Naive thymus-derived CD4-positive, alpha-beta T cell (primary cell): ENCODE measurements at regions of chr1 and their contacts with region 1.

Region 1: GRCh38 chr1:156591432-156592157 is at the start of gene NAXE:
- DNase-seq: peak; percentile 54 to 81 (median 65)
- ATAC-seq: peak; percentile 97
- H3K4me3 ChIP-seq: peak within 1 kb of the TSS; percentile 69
- H3K4me3 Mint-ChIP-seq: peak within 1 kb of the TSS; percentile 82 to 93 (median 89)
- H3K27ac ChIP-seq: peak within 1 kb of the TSS; percentile 89
- H3K27ac Mint-ChIP-seq: peak within 1 kb of the TSS; percentile 86 to 98 (median 93)
- H3K4me1 ChIP-seq: peaks cover 8 to 12% of the 10 kb centered on the region in 2 donors
- H3K4me1 Mint-ChIP-seq: peaks cover 16 to 32% (median 28%) of the 10 kb centered on the region in 7 donors
- H3K27me3 ChIP-seq: no peaks in the 10 kb centered on the region
- H3K27me3 Mint-ChIP-seq: no peaks in the 10 kb centered on the region
- total RNA-seq, gene NAXE: 25.6 to 58.8 (median 40.7) TPM

Region 2: DNA sequence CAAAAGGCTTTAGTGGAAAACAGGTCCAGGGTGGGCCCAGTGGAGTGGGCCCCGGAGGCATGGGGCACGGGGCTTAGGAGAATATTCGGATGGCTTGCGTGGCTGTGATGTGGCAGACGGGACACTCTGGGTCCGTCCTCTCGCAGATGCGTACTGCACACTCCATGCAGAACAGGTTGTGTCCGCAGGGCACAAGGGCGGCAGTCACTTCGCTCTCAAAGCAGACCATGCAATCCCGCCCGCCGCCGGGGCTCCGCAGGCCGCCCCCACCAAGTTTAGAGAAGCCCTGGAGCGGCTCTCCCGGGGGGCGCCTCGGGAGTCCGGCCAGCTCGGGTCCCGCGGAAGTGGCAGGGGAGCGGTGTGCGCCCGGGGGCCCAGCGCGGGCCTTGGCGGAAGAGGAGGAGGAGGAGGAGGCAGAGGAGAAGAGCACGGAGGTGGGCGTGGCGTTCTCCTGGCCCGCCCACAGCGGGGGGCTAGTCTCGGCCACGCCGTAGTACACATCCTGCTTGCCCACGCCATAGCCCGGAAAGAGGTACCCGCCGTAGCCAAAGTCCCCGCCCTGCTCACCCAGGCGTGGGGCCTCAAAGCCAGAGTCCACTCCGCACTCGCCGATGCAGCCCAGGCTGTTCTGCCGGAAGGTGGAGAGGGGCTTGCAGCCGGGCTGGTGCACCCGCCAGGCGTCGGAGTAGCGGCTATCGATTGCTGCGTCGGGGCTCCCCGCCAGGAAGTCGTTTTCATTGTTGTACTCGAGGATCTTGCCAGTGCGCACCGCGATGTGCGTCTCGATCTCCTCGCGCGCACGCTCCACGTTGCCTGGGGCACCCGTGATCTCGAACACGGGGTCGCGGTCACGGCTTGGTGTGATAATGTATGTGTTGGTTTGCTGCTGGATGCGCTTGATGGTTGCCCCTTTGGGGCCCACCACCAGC is 514.8 kb before region 1 on chr1:
- CTCF ChIA-PET with region 1: no interaction called
- POLR2A ChIA-PET with region 1: no interaction called
- intact Hi-C with region 1: no loop called
- DNase-seq: no peak
- ATAC-seq: peak; percentile 65
- H3K4me3 ChIP-seq: no peak overlapping the region
- H3K4me3 Mint-ChIP-seq: peak overlapping the region in 2 of 10 donors; percentile 51 to 56
- H3K27ac ChIP-seq: no peak overlapping the region
- H3K27ac Mint-ChIP-seq: no peak overlapping the region
- H3K4me1 ChIP-seq: peaks cover 0 to under 1% of the 10 kb centered on the region in 2 donors
- H3K4me1 Mint-ChIP-seq: peaks cover 0 to 15% (median 0%) of the 10 kb centered on the region in 7 donors
- H3K27me3 ChIP-seq: no peaks in the 10 kb centered on the region
- H3K27me3 Mint-ChIP-seq: peaks cover 0 to 54% (median 5%) of the 10 kb centered on the region in 5 donors

Region 3: DNA sequence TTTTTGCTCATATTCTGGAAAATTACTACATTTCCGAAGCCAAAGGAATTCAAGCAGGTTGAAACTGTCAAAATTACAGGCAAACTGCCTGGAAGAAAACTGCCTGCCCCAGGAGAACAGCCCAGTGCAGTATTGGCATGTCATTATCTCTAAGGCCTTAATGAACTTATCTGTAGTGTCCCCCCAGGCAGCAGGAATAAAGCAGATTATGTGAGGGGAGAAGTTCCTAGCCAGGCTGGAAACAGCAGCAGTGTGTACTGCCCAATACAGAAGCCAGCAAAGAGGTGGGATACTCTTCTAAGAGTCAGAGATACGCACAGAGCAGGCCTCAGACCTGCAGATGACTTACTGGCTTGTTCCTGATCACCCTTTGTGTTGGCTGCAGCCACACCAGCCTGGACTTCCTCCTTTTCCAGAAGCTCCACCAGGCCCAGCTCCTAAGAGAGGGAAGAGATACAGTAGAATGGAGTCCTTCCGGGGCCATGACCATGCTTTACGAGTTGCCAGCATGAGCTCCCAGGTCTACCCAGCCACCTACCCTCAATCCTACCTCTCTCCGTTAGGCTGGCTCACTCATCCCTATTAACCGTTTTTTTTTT is 30.9 kb before region 1 on chr1:
- CTCF ChIA-PET with region 1: no interaction called
- POLR2A ChIA-PET with region 1: no interaction called
- intact Hi-C with region 1: no loop called
- DNase-seq: no peak
- ATAC-seq: no peak
- H3K4me3 ChIP-seq: no peak overlapping the region
- H3K4me3 Mint-ChIP-seq: no peak overlapping the region
- H3K27ac ChIP-seq: no peak overlapping the region
- H3K27ac Mint-ChIP-seq: no peak overlapping the region
- H3K4me1 ChIP-seq: no peaks in the 10 kb centered on the region
- H3K4me1 Mint-ChIP-seq: peaks cover 0 to 1% (median 0%) of the 10 kb centered on the region in 7 donors
- H3K27me3 ChIP-seq: no peaks in the 10 kb centered on the region
- H3K27me3 Mint-ChIP-seq: no peaks in the 10 kb centered on the region

Region 4: DNA sequence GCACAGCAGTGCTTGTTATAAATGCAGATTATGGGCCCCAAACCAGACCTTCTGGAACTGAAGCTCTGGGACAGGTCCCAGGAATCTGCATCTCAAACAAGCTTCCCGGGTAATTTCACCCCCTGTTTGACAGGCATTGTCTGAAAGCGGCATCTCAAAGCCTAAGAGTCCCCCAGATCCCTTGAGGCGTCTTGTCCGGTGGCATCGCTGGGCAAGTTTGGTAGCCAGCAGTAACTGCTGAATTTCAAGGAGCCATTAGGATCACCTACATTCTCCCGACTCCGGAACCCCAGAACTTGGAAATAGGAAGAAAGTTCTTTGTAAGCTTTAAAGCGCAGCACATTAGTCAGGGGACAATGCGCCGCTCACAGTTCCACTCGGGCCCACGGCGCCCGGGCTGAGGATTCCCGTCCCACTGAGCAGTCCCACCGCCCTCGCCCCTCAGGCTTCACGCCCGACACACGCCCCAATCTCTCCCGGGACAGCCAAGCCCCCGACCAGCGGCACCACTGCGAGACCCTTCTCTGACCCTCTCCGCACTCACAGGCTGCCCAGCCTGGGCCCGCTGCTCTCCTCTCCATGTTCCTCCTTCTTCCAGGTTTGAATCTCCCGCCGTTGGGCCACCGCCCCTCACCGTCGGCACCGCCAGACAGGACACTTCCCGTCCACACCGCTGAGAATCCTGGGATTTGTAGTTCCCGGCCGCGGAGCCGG is 19.5 kb before region 1 on chr1 and contains the start of gene IQGAP3:
- CTCF ChIA-PET with region 1: interaction called, 4 read pairs
- POLR2A ChIA-PET with region 1: no interaction called
- intact Hi-C with region 1: loop called in 1 of 2 experiments (anchors 1 kb)
- DNase-seq: peak; percentile 49 to 74 (median 63)
- ATAC-seq: peak; percentile 93
- H3K4me3 ChIP-seq: peak within 1 kb of the TSS; percentile 41
- H3K4me3 Mint-ChIP-seq: peak within 1 kb of the TSS; percentile 69 to 94 (median 84)
- H3K27ac ChIP-seq: no peak within 1 kb of the TSS
- H3K27ac Mint-ChIP-seq: peak within 1 kb of the TSS in 5 of 9 donors; percentile 38 to 84 (median 59)
- H3K4me1 ChIP-seq: peaks cover 4 to 9% of the 10 kb centered on the region in 2 donors
- H3K4me1 Mint-ChIP-seq: peaks cover 10 to 27% (median 19%) of the 10 kb centered on the region in 7 donors
- H3K27me3 ChIP-seq: peaks cover 0 to 16% of the 10 kb centered on the region in 2 donors
- H3K27me3 Mint-ChIP-seq: peaks cover 16 to 41% (median 32%) of the 10 kb centered on the region in 5 donors
- total RNA-seq, gene IQGAP3: 0.24 to 14.4 TPM in 2 of 5 experiments, not detected in the others